CD4-positive, alpha-beta T cell (primary cell): ENCODE measurements at regions of chr19 and their contacts with region 1.

Region 1: GRCh38 chr19:45886427-45887199 is 672 bp upstream of the IRF2BP1 start:
- DNase-seq: peak; percentile 80 to 95 (median 85)
- ATAC-seq: peak; percentile 68
- H3K4me3 ChIP-seq: peak overlapping the region; percentile 78
- H3K4me3 Mint-ChIP-seq: peak overlapping the region; percentile 98
- H3K27ac ChIP-seq: peak overlapping the region; percentile 82 to 87
- H3K27ac Mint-ChIP-seq: peak overlapping the region; percentile 99
- H3K4me1 ChIP-seq: peaks cover 46% of the 10 kb centered on the region
- H3K4me1 Mint-ChIP-seq: peaks cover 31% of the 10 kb centered on the region
- H3K27me3 ChIP-seq: no peaks in the 10 kb centered on the region
- H3K27me3 Mint-ChIP-seq: no peaks in the 10 kb centered on the region
- CTCF ChIP-seq: no peak

Region 2: GRCh38 chr19:45730389-45731288 is 156.0 kb before region 1 on chr19 and contains the start of gene FBXO46:
- CTCF ChIA-PET with region 1: no interaction called
- POLR2A ChIA-PET with region 1: interaction called, 4 read pairs
- intact Hi-C with region 1: loop called in 1 of 2 experiments (anchors 5 kb)
- DNase-seq: peak; percentile 83 to 97 (median 91)
- ATAC-seq: peak; percentile 99
- H3K4me3 ChIP-seq: peak within 1 kb of the TSS; percentile 77
- H3K4me3 Mint-ChIP-seq: peak within 1 kb of the TSS; percentile 97
- H3K27ac ChIP-seq: peak within 1 kb of the TSS; percentile 31 to 49
- H3K27ac Mint-ChIP-seq: peak within 1 kb of the TSS; percentile 83
- H3K4me1 ChIP-seq: peaks cover 37% of the 10 kb centered on the region
- H3K4me1 Mint-ChIP-seq: peaks cover 33% of the 10 kb centered on the region
- H3K27me3 ChIP-seq: no peaks in the 10 kb centered on the region
- H3K27me3 Mint-ChIP-seq: no peaks in the 10 kb centered on the region
- CTCF ChIP-seq: no peak
- total RNA-seq, gene FBXO46: 17.2 to 17.5 TPM

Region 3: DNA sequence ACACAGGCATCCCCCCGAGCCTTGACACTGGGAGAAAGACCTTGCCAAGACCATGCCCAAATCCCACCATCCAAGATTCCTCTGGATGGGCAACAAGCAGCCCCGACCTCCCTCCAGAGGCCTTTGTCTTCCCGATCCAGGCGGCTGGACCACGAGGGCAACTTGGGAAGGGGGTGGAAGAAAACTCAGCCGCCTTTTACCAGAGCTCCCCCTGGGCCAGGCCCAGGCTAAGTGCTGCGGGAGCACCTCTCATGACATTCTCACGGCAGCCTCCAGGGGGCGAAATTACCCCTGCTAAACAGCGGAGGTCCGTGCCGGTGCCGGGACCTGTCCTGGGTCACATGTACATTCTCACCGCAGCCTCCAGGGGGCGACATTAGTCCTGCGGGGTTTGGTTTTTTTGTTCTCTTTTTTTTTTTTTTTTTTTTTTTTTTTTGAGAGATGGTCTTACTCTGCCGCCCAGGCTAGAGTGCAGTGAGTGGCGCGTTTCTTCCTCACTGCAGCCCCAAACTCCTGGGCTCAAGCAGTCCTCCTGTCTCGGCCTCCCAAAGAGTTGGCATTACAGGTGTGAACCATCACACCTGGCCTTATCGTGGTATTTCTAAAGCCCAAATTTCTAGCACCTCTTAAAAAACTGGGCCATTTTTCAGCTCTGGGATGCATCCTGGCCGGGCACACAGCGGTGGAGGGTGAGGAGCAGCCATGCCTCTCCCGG is 69.4 kb before region 1 on chr19:
- CTCF ChIA-PET with region 1: interaction called, 7 read pairs
- POLR2A ChIA-PET with region 1: no interaction called
- intact Hi-C with region 1: loop called (anchors 1 to 2 kb)
- DNase-seq: peak; percentile 92 to 98 (median 96)
- ATAC-seq: peak; percentile 100
- H3K4me3 ChIP-seq: no peak overlapping the region
- H3K4me3 Mint-ChIP-seq: no peak overlapping the region
- H3K27ac ChIP-seq: no peak overlapping the region
- H3K27ac Mint-ChIP-seq: no peak overlapping the region
- H3K4me1 ChIP-seq: peaks cover 25% of the 10 kb centered on the region
- H3K4me1 Mint-ChIP-seq: peaks cover 6% of the 10 kb centered on the region
- H3K27me3 ChIP-seq: peaks cover 7 to 13% of the 10 kb centered on the region in 2 experiments
- H3K27me3 Mint-ChIP-seq: peaks cover 25% of the 10 kb centered on the region
- CTCF ChIP-seq: peak; percentile 100

Region 4: DNA sequence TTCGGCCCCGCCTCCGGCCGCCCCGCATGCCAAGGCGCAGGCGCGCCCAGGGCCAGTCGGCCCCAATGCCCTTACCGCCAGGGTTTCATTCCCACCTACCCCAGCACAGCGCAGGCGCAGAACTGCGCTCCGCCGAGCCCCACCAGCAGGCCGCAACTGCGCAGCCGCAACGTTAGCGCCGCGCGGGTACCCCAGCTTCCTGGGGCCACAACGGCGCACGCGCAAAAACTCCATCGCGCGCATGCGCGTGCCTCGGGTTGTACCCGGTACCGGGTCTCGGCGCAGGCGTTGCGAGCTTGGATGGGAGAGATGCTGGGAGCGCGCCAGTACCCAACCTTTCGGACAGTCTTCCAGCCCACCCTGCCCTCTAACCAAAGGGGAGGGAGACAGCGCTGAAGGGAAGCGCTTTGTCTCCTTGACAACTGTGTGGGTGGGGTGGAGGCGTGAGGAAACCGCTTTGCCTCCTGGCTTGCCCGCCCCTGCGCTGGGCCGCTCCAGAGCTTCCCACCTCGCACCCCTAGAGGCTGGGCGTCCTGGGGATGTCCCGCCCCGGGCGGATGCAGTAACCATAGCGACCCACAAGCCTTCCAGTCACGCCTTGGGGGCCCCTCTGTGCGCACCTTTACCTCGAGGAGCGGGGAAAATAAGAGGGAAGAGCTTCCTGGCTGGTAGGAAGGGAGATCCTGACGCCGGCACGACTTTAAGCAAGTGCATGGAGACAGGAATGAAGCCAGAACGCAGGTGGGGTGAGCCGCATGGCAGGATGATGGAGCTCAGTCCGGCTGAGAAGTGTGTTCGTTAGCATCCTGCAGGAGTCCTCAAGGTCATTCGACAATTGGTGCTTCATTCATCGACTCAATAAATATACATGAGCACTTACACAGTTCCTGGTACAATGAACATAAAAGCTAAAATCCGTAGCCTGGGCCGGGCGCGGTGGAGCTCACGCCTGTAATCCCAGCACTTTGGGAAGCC is 16.3 kb after region 1 on chr19:
- CTCF ChIA-PET with region 1: interaction called, 5 read pairs
- POLR2A ChIA-PET with region 1: interaction called, 44 read pairs
- intact Hi-C with region 1: loop called (anchors 1 kb)
- DNase-seq: peak; percentile 97 to 100 (median 99)
- ATAC-seq: peak; percentile 81
- H3K4me3 ChIP-seq: peak overlapping the region; percentile 64
- H3K4me3 Mint-ChIP-seq: peak overlapping the region; percentile 95
- H3K27ac ChIP-seq: peak overlapping the region; percentile 68 to 85
- H3K27ac Mint-ChIP-seq: peak overlapping the region; percentile 89
- H3K4me1 ChIP-seq: peaks cover 26% of the 10 kb centered on the region
- H3K4me1 Mint-ChIP-seq: peaks cover 28% of the 10 kb centered on the region
- H3K27me3 ChIP-seq: no peaks in the 10 kb centered on the region
- H3K27me3 Mint-ChIP-seq: no peaks in the 10 kb centered on the region
- CTCF ChIP-seq: no peak

Region 5: GRCh38 chr19:46016426-46017094 is 129.9 kb after region 1 on chr19:
- CTCF ChIA-PET with region 1: no interaction called
- POLR2A ChIA-PET with region 1: no interaction called
- intact Hi-C with region 1: loop called in 1 of 2 experiments (anchors 1 kb)
- DNase-seq: peak; percentile 67 to 93 (median 76)
- ATAC-seq: peak; percentile 74
- H3K4me3 ChIP-seq: peak overlapping the region; percentile 85
- H3K4me3 Mint-ChIP-seq: peak overlapping the region; percentile 95
- H3K27ac ChIP-seq: no peak overlapping the region
- H3K27ac Mint-ChIP-seq: peak overlapping the region; percentile 56
- H3K4me1 ChIP-seq: peaks cover 23% of the 10 kb centered on the region
- H3K4me1 Mint-ChIP-seq: peaks cover 21% of the 10 kb centered on the region
- H3K27me3 ChIP-seq: peaks cover 7 to 8% of the 10 kb centered on the region in 2 experiments
- H3K27me3 Mint-ChIP-seq: peaks cover 7% of the 10 kb centered on the region
- CTCF ChIP-seq: peak; percentile 94

Region 6: DNA sequence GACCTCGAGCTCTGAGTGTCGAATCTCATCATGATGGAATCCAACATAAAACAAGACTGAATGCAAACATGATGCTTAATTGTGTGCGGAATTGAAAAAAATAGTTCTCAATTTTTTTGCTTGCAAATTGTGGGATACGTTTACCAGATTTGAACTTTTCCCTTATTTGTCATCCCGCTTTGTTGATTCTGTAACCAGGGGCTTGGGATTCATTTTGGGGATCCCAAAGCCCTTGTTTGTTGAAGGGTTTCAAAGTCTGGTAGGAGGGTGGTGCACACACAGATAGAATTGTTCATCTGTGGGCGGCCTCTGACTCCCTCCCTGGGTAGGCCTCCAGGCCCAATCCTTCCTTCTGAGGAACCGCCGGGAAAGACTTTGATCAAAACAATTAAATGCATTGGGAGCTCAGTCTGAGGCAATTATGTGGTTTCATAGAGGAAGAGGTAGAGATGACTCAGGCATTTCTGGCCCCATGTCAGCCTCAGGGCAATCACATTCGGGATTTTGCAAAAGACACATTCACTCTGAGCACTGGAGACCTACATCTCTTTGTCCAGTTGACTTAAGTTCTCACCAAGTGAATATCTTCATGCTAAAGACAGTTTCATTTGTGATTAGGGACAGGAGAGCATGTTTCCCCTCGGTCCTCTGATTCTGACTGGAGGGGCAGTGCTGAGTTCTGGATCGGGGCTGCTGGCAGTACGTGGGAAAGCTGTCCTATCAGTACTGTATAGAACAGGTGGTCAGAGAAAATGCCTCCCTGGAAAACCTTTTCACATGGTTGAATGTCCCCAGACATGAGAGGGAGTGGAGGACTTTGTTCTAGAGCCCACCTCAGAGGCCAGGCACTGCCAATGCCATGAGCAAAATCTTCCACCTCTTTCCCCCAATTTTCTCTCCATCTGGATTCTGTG is 182.0 kb after region 1 on chr19:
- CTCF ChIA-PET with region 1: no interaction called
- POLR2A ChIA-PET with region 1: no interaction called
- intact Hi-C with region 1: no loop called
- DNase-seq: peak in 2 of 14 experiments; percentile 9 to 13
- ATAC-seq: no peak
- H3K4me3 ChIP-seq: no peak overlapping the region
- H3K4me3 Mint-ChIP-seq: no peak overlapping the region
- H3K27ac ChIP-seq: no peak overlapping the region
- H3K27ac Mint-ChIP-seq: no peak overlapping the region
- H3K4me1 ChIP-seq: no peaks in the 10 kb centered on the region
- H3K4me1 Mint-ChIP-seq: no peaks in the 10 kb centered on the region
- H3K27me3 ChIP-seq: peaks cover 38 to 59% of the 10 kb centered on the region in 2 experiments
- H3K27me3 Mint-ChIP-seq: peaks cover 80% of the 10 kb centered on the region
- CTCF ChIP-seq: no peak